ENCODE measurements at regions of chr11 and their contacts with region 1.

Region 1: GRCh38 chr11:19311308-19312030 is 70.7 kb upstream of the E2F8 start:
- DNase-seq: peak; percentile 66
- H3K4me3 ChIP-seq: peak overlapping the region in 1 of 2 experiments; percentile 23; a peak in 1 of 4 replicates
- H3K27ac ChIP-seq: no peak overlapping the region
- H3K4me1 ChIP-seq: peaks cover 0 to 12% of the 10 kb centered on the region in 2 experiments; a peak in 1 of 4 replicates
- H3K27me3 ChIP-seq: peaks cover 25% of the 10 kb centered on the region; the same call in 1 of the 2 replicates
- CTCF ChIP-seq: peak; percentile 85
- EP300 ChIP-seq: no peak
- RAD21 ChIP-seq: peak; percentile 70

Region 2: DNA sequence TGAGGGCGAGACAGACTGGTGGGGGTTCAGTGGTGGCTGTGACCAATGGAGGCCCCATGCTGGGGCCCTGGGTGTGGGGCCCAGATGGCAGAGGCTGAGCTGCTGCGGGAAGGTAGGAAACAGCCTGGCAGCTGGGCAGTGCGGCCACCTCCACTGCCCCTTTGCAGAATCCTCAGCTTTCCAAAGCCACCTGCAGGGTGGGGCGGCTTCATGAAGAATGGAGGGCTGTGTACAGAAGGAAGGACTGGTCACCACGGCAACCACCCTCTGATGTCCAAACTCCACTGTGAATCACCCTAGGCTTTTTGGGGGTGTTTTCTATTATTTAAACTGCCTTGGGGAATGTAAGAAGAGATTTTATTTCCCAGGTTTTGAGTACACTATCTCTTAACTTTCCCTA is 234.9 kb after region 1 on chr11:
- CTCF ChIA-PET with region 1: interaction called, 20 read pairs
- POLR2A ChIA-PET with region 1: no interaction called
- DNase-seq: no peak
- H3K4me3 ChIP-seq: no peak overlapping the region
- H3K27ac ChIP-seq: no peak overlapping the region
- H3K4me1 ChIP-seq: no peaks in the 10 kb centered on the region; a peak in 1 of 4 replicates
- H3K27me3 ChIP-seq: peaks cover 36% of the 10 kb centered on the region
- CTCF ChIP-seq: no peak
- EP300 ChIP-seq: no peak
- RAD21 ChIP-seq: no peak

Measured in SK-N-SH (cell line).